Left ventricle myocardium inferior (tissue), 1 donor: ENCODE measurements at regions of chr6 and their contacts with region 1.

Region 1: GRCh38 chr6:108673602-108674001 is 112.9 kb downstream of the FOXO3 start:
- DNase-seq: no peak
- H3K4me3 ChIP-seq: no peak overlapping the region
- H3K27ac ChIP-seq: no peak overlapping the region
- H3K4me1 ChIP-seq: peaks cover 100% of the 10 kb centered on the region
- H3K27me3 ChIP-seq: no peaks in the 10 kb centered on the region
- CTCF ChIP-seq: no peak

Region 2: DNA sequence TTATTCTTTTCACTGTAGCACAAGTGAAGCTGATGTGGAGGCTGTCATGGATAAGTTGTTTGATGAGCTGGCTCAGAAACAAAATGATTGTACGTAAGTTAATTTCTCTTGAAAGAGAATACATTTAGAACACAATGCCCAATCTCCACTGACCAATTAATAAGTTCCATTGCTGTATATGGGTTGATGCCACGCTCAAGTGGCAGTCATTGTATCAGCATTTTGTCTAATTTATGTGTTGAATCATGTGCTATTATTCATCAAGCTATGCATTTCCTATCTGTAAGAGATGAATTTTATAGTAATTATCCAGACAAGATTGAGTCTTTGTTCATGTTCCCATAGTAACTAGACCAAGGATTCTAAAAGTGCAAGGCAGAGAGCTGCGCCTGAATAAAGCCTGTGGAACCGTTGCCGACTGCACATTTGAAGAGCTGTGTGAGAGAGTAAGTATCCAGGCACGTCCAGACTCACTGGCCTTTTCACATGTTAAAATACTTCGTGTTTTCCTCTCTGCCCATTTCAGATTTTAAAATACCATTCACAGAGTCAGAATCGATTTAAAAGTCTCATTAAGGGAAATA is 196.7 kb before region 1 on chr6:
- intact Hi-C with region 1: no loop called
- DNase-seq: no peak
- H3K4me3 ChIP-seq: no peak overlapping the region
- H3K27ac ChIP-seq: no peak overlapping the region
- H3K4me1 ChIP-seq: no peaks in the 10 kb centered on the region
- H3K27me3 ChIP-seq: no peaks in the 10 kb centered on the region
- CTCF ChIP-seq: no peak

Region 3: GRCh38 chr6:108531336-108531735 is 142.3 kb before region 1 on chr6:
- intact Hi-C with region 1: no loop called
- DNase-seq: no peak
- H3K4me3 ChIP-seq: no peak overlapping the region
- H3K27ac ChIP-seq: no peak overlapping the region
- H3K4me1 ChIP-seq: no peaks in the 10 kb centered on the region
- H3K27me3 ChIP-seq: no peaks in the 10 kb centered on the region
- CTCF ChIP-seq: no peak

Region 4: DNA sequence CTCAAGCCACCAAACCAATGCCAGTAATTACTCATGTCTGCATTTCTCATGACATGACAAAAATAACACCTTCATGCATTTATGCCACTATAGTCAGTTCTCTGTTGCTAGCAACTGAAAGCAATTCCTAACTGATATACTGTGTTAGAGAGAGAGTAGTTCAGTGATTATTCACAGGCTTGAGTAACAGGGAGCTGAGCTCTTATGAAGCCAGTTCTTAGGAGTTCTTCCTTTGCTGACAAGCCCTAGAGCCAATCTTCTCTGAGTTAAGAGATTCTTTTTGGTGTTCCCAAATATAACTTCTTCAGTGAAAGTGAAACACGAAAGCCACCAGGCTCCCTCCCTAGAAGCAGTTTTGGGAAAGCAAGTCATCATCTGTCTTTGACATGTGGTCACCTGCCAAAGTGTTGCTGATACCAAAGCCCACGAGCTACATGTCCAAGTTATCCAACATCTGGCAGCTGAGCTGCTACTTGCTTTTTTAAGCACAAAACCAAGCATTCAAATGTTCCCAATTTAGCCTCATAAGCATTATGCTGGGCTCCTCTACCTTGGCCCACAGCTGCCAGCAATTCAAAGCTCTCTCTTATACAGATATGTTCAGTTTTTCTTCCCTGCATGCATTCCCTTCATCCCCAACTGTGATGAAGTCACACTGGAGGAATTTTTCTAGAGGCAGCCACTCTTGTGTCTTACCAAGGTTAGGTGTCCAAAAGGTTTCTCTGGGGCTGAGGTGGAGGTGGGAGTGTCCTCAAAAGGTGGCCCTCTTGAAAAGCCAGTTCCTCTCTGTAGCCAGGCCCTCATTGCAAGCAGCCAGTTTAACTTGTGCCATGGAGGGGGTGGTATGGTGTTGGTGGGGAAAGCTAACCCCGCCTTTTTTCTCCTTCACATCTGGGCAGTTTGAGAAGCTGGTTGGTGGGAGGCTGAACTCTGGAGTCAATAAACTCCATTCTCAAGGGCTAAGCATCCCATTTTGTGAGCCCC is 81.9 kb after region 1 on chr6:
- intact Hi-C with region 1: no loop called
- DNase-seq: no peak
- H3K4me3 ChIP-seq: peak overlapping the region; percentile 27
- H3K27ac ChIP-seq: peak overlapping the region; percentile 66
- H3K4me1 ChIP-seq: peaks cover 41% of the 10 kb centered on the region
- H3K27me3 ChIP-seq: no peaks in the 10 kb centered on the region
- CTCF ChIP-seq: no peak

Region 5: GRCh38 chr6:108896111-108896661 is 222.6 kb after region 1 on chr6:
- intact Hi-C with region 1: loop called (anchors 10 kb)
- DNase-seq: no peak
- H3K4me3 ChIP-seq: no peak overlapping the region
- H3K27ac ChIP-seq: peak overlapping the region; percentile 79
- H3K4me1 ChIP-seq: peaks cover 47% of the 10 kb centered on the region
- H3K27me3 ChIP-seq: no peaks in the 10 kb centered on the region
- CTCF ChIP-seq: no peak

Region 6: DNA sequence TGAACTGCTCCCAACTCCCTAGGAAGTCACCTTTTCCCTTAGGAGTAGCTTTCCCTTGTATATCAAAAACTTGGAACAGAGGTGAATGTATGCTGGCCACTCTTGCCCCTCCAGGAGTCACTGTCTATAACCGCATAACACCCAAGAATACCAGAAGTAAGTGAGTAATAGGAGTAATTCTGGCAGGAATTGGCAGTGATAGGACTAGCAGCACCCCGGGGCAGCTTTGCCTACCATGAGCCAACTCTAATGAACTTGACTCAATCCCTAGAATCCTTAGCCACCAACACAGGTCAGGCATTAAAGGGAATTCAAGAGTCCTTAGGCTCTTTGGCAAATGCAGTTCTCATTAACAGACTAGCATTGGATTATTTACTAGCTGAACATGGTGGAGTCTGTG is 737.4 kb after region 1 on chr6:
- intact Hi-C with region 1: no loop called
- DNase-seq: no peak
- H3K4me3 ChIP-seq: no peak overlapping the region
- H3K27ac ChIP-seq: no peak overlapping the region
- H3K4me1 ChIP-seq: no peaks in the 10 kb centered on the region
- H3K27me3 ChIP-seq: no peaks in the 10 kb centered on the region
- CTCF ChIP-seq: no peak